GM12878 (cell line): ENCODE measurements at regions of chr1 and their contacts with region 1.

Region 1: DNA sequence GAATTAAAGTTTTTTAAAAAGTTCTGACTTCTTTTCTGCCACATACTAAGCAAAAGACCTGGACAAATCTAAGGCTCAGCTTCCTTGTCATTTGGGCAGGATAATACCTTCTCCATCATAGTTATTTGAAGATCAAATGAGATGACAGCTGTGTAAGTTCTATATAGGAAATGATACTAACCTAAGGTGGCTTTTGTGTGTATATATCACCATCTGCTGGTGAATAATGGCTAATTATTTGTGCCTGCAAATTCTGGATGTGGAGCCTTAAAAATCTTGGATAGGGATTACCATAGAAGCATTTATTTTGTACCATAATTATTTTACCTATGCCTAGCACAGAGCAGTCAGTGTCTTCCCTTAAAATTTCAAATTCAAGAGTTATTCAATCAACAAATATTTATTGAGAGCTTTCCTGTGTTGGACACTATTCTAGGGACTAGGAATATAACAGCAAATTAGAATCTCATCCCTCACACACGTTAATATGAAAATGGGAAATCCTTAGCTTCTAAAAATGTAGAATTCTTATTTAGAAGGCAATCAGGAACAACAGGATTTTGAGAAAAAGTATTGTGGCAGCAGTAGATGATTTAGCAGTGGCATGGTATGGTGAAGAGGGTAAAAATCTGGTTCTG is 89.8 kb downstream of the TMEM200B start:
- DNase-seq: peak; percentile 11
- ATAC-seq: peak; percentile 61; the same call in 2 of the 3 replicates
- H3K4me3 ChIP-seq: no peak overlapping the region
- H3K27ac ChIP-seq: no peak overlapping the region
- H3K4me1 ChIP-seq: no peaks in the 10 kb centered on the region
- H3K27me3 ChIP-seq: no peaks in the 10 kb centered on the region
- CTCF ChIP-seq: peak; percentile 44 to 74 (median 52); a peak in 4 of 6 replicates
- EP300 ChIP-seq: no peak
- POLR2A ChIP-seq: no peak
- RAD21 ChIP-seq: peak; percentile 93

Region 2: GRCh38 chr1:28886731-28887418 is 147.1 kb before region 1 on chr1:
- CTCF ChIA-PET with region 1: interaction called, 547 read pairs
- POLR2A ChIA-PET with region 1: interaction called, 15 read pairs
- RAD21 ChIA-PET with region 1: interaction called, 284 read pairs
- SMC1A ChIA-PET with region 1: interaction called, 315 read pairs
- in situ Hi-C with region 1: loop called (anchors 5 kb)
- intact Hi-C with region 1: loop called (anchors 1 kb)
- DNase-seq: peak; percentile 32
- ATAC-seq: peak; percentile 84
- H3K4me3 ChIP-seq: peak overlapping the region; percentile 89
- H3K27ac ChIP-seq: peak overlapping the region; percentile 68
- H3K4me1 ChIP-seq: peaks cover 34% of the 10 kb centered on the region
- H3K27me3 ChIP-seq: no peaks in the 10 kb centered on the region
- CTCF ChIP-seq: no peak
- EP300 ChIP-seq: no peak
- POLR2A ChIP-seq: peak; percentile 85
- RAD21 ChIP-seq: no peak

Region 3: DNA sequence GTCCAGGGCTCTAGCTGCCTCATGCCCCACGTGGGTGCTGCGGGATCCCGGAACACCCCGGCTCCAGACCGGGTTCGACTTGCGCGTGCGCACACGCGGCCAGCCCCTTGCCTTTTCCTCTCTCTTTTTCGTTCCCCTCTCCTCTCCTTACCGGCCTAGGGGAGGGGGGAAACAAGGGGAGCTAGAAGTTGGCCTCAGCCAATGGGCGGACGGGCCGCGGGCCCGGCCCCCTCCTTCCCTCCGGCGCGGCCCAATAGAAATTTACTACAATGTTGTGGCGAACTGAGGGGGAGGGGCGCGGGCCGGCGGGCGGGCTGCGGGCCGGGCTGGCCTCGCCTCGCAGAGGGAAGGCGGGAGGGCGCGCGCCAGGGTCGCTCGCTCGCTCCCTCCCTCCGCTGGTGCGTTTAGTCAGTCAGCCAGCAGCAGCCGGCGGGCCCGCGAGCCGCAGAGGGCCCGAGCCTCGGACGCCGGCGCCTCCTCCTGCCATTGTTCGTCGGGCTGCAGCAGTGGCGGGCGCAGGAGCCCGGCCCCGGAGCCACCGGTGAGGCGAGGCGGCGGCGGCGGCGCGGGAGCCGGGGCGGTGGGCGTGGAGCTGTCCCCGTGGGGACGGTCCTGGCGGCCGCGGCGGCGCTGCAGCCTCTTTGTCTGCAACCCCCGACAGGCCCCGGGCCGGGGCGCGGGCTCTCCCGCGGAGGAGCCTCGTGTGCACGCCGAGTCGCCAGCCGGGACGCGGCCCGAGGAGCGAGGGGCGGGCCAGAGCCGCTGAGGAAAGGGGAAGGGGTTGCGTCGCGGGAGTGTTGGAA is 119.5 kb before region 1 on chr1 and contains the start of gene EPB41:
- CTCF ChIA-PET with region 1: interaction called, 9 read pairs
- POLR2A ChIA-PET with region 1: no interaction called
- RAD21 ChIA-PET with region 1: interaction called, 4 read pairs
- SMC1A ChIA-PET with region 1: interaction called, 12 read pairs
- in situ Hi-C with region 1: no loop called
- intact Hi-C with region 1: no loop called
- DNase-seq: peak; percentile 56
- ATAC-seq: peak; percentile 97
- H3K4me3 ChIP-seq: peak within 1 kb of the TSS; percentile 66
- H3K27ac ChIP-seq: peak within 1 kb of the TSS; percentile 40; the same call in 1 of the 2 replicates
- H3K4me1 ChIP-seq: peaks cover 7% of the 10 kb centered on the region
- H3K27me3 ChIP-seq: no peaks in the 10 kb centered on the region
- CTCF ChIP-seq: no peak
- EP300 ChIP-seq: no peak
- POLR2A ChIP-seq: peak; percentile 73
- RAD21 ChIP-seq: no peak
- polyA plus RNA-seq, gene EPB41: 1.1 to 3.1 TPM

Region 4: DNA sequence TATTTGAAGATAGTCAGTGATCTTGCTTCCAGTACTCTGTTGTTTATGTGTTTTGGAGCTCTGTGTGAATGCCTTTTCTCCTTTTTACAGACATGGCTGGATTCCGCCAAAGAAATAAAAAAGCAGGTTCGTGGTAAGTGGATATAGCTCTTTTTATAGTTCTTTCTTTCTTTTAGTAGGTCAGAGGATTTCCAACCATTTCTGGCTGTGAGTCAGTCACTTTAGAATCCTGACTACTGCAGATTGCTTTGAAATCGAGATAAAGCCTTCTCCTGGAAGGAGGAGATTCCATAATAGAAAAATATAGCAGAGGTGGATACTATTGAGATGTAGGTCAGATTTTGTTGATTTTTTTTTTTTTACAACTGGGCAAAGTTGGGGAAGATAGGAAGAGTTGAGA is 22.2 kb before region 1 on chr1:
- CTCF ChIA-PET with region 1: no interaction called
- POLR2A ChIA-PET with region 1: no interaction called
- RAD21 ChIA-PET with region 1: no interaction called
- SMC1A ChIA-PET with region 1: no interaction called
- in situ Hi-C with region 1: no loop called
- intact Hi-C with region 1: no loop called
- DNase-seq: no peak
- ATAC-seq: no peak
- H3K4me3 ChIP-seq: no peak overlapping the region
- H3K27ac ChIP-seq: no peak overlapping the region
- H3K4me1 ChIP-seq: no peaks in the 10 kb centered on the region
- H3K27me3 ChIP-seq: no peaks in the 10 kb centered on the region
- CTCF ChIP-seq: no peak
- EP300 ChIP-seq: no peak
- POLR2A ChIP-seq: no peak
- RAD21 ChIP-seq: no peak

Region 5: GRCh38 chr1:29022620-29023019 is 11.3 kb before region 1 on chr1:
- CTCF ChIA-PET with region 1: interaction called, 12 read pairs
- POLR2A ChIA-PET with region 1: no interaction called
- RAD21 ChIA-PET with region 1: interaction called, 7 read pairs
- SMC1A ChIA-PET with region 1: interaction called, 12 read pairs
- in situ Hi-C with region 1: no loop called
- intact Hi-C with region 1: no loop called
- DNase-seq: no peak
- ATAC-seq: no peak
- H3K4me3 ChIP-seq: no peak overlapping the region
- H3K27ac ChIP-seq: no peak overlapping the region
- H3K4me1 ChIP-seq: no peaks in the 10 kb centered on the region
- H3K27me3 ChIP-seq: no peaks in the 10 kb centered on the region
- CTCF ChIP-seq: no peak
- EP300 ChIP-seq: no peak
- POLR2A ChIP-seq: no peak
- RAD21 ChIP-seq: no peak

Region 6: DNA sequence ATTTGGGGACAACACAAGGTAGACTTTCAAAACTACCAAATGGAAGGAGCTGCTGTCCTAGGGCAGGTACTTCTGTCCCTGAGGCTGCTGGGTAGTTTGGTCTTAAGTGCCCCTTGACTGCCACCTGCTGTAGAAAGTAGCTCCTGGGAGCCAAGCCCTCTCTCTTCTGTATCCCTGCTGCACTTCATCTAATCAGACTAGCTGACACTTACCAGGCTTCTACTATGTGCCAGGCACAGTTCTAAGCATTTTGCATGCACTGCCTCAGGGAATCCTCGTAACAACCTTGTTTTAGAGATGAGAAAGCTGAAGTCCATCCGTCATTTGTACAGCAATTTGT is 163.6 kb after region 1 on chr1:
- CTCF ChIA-PET with region 1: interaction called, 91 read pairs
- POLR2A ChIA-PET with region 1: no interaction called
- RAD21 ChIA-PET with region 1: interaction called, 46 read pairs
- SMC1A ChIA-PET with region 1: interaction called, 75 read pairs
- in situ Hi-C with region 1: no loop called
- intact Hi-C with region 1: loop called (anchors 5 kb)
- DNase-seq: no peak
- ATAC-seq: peak; percentile 97
- H3K4me3 ChIP-seq: no peak overlapping the region
- H3K27ac ChIP-seq: no peak overlapping the region
- H3K4me1 ChIP-seq: peaks cover 2% of the 10 kb centered on the region; the same call in 1 of the 2 replicates
- H3K27me3 ChIP-seq: no peaks in the 10 kb centered on the region
- CTCF ChIP-seq: peak; percentile 32 to 55 (median 47); a peak in 5 of 6 replicates
- EP300 ChIP-seq: no peak
- POLR2A ChIP-seq: no peak
- RAD21 ChIP-seq: peak; percentile 41